CD8-positive, alpha-beta T cell (primary cell): ENCODE measurements at regions of chr1 and their contacts with region 1.

Region 1: DNA sequence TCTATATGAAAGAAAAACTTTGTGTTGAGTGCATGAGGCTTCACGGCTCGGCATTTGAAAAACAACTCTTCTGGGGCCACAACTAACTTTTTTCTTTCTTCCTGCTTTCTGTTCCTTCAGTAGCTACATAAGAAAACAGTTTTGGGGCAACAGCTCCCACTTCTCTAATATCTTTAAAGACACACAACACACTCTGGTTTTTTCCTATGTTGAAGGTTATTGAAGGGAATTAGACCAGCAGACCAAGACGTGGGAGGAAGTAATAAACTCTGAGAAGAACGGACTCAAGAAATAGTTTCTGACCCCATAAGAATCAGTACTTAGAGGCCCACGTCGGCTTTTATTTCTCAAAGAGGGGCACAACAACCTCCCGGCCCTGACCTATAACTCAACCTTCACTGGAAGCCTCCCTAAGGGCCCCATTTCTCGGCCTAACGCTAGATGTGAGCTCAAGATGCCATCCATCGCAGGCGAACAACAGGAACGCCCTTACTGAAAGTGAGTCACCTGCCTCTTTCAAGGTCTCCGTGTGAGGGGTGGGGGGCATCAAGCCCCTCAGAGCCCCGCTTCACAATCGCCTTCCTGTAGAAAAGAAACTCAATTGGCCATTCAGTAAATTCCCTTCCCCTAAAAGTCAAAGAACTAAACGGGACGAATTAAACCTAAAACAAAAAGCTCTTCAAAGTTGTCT is 844 bp downstream of the ZMYM6 start:
- DNase-seq: peak in 8 of 9 experiments; percentile 26 to 65 (median 56)
- ATAC-seq: peak; percentile 59
- H3K4me3 ChIP-seq: peak overlapping the region; percentile 92 to 97
- H3K4me3 Mint-ChIP-seq: peak overlapping the region; percentile 99
- H3K27ac ChIP-seq: peak overlapping the region; percentile 62 to 85
- H3K27ac Mint-ChIP-seq: peak overlapping the region; percentile 98
- H3K4me1 ChIP-seq: peaks cover 25% of the 10 kb centered on the region
- H3K4me1 Mint-ChIP-seq: peaks cover 49% of the 10 kb centered on the region
- H3K27me3 ChIP-seq: no peaks in the 10 kb centered on the region
- H3K27me3 Mint-ChIP-seq: no peaks in the 10 kb centered on the region
- CTCF ChIP-seq: no peak

Region 2: DNA sequence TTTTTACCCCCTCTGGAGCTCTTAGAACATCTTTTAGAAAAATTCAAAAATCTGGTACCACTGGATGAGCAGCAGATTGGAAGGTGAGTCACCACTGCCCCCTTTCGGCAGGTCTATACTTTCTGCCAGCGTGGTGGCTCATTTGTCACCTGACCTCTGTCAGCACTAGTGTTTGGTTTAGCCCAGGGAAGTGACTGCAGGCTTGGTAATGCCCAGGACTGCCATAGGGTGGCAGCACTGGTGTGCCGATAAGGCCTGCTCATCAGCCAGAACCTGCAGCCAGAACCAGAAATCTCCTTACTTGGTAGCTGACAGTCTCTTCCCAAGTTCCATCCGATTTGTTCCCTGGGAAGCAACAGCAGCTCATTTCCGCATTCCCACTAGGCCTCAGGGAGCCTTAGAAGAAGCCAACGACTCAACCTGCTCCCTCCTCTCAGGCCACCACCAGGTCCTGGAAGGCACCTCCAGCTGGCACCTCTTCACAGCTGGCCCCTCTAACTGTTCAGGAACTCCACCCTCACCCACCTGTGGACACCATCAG is 178.2 kb before region 1 on chr1:
- CTCF ChIA-PET with region 1: interaction called, 3 read pairs
- POLR2A ChIA-PET with region 1: no interaction called
- intact Hi-C with region 1: loop called in 1 of 2 experiments (anchors 1 kb)
- DNase-seq: peak; percentile 77 to 96 (median 87)
- ATAC-seq: peak; percentile 100
- H3K4me3 ChIP-seq: no peak overlapping the region
- H3K4me3 Mint-ChIP-seq: no peak overlapping the region
- H3K27ac ChIP-seq: peak overlapping the region in 1 of 2 experiments; percentile 46
- H3K27ac Mint-ChIP-seq: peak overlapping the region; percentile 7
- H3K4me1 ChIP-seq: peaks cover 2% of the 10 kb centered on the region
- H3K4me1 Mint-ChIP-seq: peaks cover 23% of the 10 kb centered on the region
- H3K27me3 ChIP-seq: no peaks in the 10 kb centered on the region
- H3K27me3 Mint-ChIP-seq: no peaks in the 10 kb centered on the region
- CTCF ChIP-seq: peak; percentile 99

Region 3: DNA sequence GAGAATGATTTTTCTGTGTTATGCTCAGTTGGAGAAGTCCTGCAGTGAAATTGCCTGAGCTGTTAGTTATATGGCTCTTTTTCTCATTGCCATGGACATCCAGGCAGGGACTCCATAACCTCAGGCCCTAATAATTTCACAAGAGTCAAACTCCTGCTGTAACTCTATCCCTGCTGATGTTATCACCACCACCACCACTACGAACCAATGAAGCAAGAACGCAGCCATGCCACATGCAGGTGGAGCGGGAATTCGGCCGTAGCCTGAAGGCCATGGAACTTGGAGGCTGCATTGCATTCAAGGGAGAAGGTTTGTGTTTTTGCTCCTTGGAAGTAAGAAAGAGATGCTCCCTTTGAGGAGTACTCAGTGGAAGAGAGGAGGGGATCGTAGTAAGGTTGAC is 84.7 kb before region 1 on chr1:
- CTCF ChIA-PET with region 1: no interaction called
- POLR2A ChIA-PET with region 1: no interaction called
- intact Hi-C with region 1: no loop called
- DNase-seq: no peak
- ATAC-seq: no peak
- H3K4me3 ChIP-seq: no peak overlapping the region
- H3K4me3 Mint-ChIP-seq: no peak overlapping the region
- H3K27ac ChIP-seq: no peak overlapping the region
- H3K27ac Mint-ChIP-seq: no peak overlapping the region
- H3K4me1 ChIP-seq: no peaks in the 10 kb centered on the region
- H3K4me1 Mint-ChIP-seq: no peaks in the 10 kb centered on the region
- H3K27me3 ChIP-seq: no peaks in the 10 kb centered on the region
- H3K27me3 Mint-ChIP-seq: peaks cover 26% of the 10 kb centered on the region
- CTCF ChIP-seq: no peak

Region 4: DNA sequence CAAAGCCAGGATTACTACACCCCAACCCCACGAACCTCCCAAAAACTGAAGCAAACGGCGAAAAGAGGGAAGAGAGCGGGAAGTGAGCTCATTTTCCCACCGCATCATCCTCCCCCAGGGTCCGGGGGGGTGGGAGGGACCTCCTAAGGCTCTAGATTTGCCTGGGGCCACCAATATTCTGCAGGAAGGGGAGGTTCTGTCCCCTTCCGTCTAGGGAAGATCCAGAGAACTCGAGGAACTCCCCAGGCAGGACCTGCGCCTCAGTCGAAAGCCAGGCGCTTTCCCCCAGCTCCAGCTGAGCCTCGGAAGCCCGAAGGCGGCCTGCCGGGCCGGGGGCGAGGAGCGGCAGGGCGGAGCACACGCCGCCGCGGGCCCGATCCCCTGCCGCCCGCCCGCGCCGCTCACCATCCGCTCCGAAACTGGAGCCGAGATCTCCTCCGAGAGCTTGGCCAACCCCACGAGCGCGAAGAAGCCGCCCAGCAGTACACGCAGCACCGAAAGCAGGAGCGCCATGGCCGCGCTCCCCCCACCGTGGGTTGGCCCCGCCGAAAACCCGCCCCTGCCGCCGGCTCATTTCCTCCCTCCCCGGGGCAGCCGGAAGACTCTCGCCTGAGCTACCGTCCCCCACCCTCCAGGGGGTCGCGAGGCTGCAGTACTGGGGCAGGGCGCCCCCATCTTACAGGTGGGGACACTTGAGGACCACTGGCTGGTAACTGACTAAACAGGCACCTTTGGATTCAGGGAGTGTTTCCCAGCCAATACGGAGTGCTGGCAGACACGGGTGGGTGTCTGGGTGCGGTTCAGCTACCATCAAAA is 45.9 kb before region 1 on chr1 and contains the start of gene TMEM35B:
- CTCF ChIA-PET with region 1: no interaction called
- POLR2A ChIA-PET with region 1: interaction called, 12 read pairs
- intact Hi-C with region 1: loop called (anchors 1 to 2 kb)
- DNase-seq: peak; percentile 55 to 87 (median 82)
- ATAC-seq: peak; percentile 96
- H3K4me3 ChIP-seq: peak within 1 kb of the TSS; percentile 77 to 81
- H3K4me3 Mint-ChIP-seq: peak within 1 kb of the TSS; percentile 99
- H3K27ac ChIP-seq: peak within 1 kb of the TSS; percentile 80 to 87
- H3K27ac Mint-ChIP-seq: peak within 1 kb of the TSS; percentile 98
- H3K4me1 ChIP-seq: peaks cover 28% of the 10 kb centered on the region
- H3K4me1 Mint-ChIP-seq: peaks cover 42% of the 10 kb centered on the region
- H3K27me3 ChIP-seq: no peaks in the 10 kb centered on the region
- H3K27me3 Mint-ChIP-seq: no peaks in the 10 kb centered on the region
- CTCF ChIP-seq: no peak
- total RNA-seq, gene TMEM35B: 1.0 to 2.6 TPM

Region 5: DNA sequence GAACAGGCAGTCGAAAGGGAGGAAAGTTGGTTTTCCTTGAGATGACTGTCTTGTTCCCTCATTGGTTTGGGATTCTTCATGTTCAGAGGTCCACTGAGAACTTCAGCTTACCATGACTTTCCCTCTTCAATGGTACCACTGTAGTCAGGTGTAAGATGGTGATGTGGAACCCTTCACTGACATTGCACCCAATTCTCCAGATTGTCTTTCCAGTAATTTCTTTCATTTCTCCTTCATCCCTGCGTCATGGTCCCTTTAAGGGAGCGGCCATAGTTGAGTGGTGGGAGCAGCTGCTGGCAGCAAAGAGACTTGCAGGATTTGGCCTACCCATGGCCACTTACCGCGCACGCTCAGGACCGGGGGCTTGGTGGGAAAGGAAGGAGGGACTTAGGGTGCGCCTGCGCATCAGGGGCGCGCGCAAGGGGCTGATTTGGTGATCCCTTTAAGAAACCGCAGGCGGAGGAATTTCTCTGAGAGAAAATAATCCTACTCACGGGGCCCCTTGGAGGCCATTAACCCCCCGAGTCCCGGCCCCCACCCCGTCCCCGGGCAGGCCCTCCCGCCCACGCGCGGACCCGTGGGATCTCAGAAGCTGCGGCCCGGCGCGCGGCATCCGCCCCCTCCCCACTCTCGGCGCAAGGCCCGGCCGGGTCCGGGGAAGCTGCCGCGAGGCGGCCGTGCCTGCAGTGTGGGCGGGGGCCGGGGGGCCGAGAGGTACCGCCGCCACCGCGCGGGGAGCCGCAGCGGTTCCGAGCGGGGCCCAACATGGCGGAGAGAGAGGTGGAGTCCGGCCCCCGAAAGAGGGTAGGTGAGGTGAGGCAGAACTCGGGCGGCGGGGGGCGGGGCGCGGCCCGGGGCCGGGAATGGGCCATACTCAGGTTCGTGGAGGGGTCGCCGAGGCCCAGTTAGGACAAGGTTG is 237.6 kb after region 1 on chr1 and contains the start of gene ZMYM4:
- CTCF ChIA-PET with region 1: no interaction called
- POLR2A ChIA-PET with region 1: no interaction called
- intact Hi-C with region 1: loop called (anchors 2 kb)
- DNase-seq: peak; percentile 70 to 96 (median 88)
- ATAC-seq: peak; percentile 95
- H3K4me3 ChIP-seq: peak within 1 kb of the TSS; percentile 65 to 73
- H3K4me3 Mint-ChIP-seq: peak within 1 kb of the TSS; percentile 89
- H3K27ac ChIP-seq: peak within 1 kb of the TSS; percentile 40 to 68
- H3K27ac Mint-ChIP-seq: peak within 1 kb of the TSS; percentile 93
- H3K4me1 ChIP-seq: peaks cover 14% of the 10 kb centered on the region
- H3K4me1 Mint-ChIP-seq: peaks cover 38% of the 10 kb centered on the region
- H3K27me3 ChIP-seq: no peaks in the 10 kb centered on the region
- H3K27me3 Mint-ChIP-seq: peaks cover 10% of the 10 kb centered on the region
- CTCF ChIP-seq: no peak
- total RNA-seq, gene ZMYM4: 32.1 to 36.5 TPM

Region 6: DNA sequence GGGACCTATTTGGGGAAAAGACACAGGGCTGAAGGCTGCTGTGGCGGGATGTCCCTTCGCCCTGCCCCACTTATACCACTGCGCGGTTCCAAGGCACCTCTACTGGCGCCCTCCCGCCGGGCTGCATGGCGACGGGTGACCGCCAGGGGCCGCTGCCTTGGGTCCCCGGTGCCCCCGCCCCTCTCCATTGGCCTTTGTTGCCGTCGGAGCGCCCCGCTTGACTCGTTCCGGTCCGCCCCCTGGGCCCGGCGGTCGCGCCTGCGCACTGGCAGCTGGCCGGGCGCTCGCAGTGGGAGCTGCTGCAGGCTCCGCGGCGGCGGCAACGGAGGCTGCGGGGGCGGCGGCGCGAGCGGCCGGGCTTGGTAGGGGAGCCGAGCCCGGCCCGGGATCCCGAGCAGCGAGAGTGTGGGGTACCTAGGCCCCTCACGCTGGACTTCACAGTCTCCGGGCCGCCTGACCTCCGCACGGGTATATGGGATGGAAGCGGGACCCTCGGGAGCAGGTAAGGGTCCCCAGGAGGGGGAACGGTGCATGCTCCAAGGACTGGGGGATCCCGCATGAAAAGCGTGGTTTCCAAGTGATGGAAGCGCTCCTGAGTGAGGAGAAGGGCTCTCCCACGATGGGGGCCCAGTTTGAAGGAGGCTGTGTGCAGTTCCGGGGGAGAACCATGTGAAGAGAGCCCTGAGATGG is 852.2 kb after region 1 on chr1 and contains the start of gene AGO1:
- CTCF ChIA-PET with region 1: no interaction called
- POLR2A ChIA-PET with region 1: no interaction called
- intact Hi-C with region 1: loop called in 1 of 2 experiments (anchors 5 kb)
- DNase-seq: peak; percentile 94 to 99 (median 97)
- ATAC-seq: peak; percentile 99
- H3K4me3 ChIP-seq: peak within 1 kb of the TSS; percentile 99 to 100
- H3K4me3 Mint-ChIP-seq: peak within 1 kb of the TSS; percentile 92
- H3K27ac ChIP-seq: peak within 1 kb of the TSS; percentile 59 to 68
- H3K27ac Mint-ChIP-seq: peak within 1 kb of the TSS; percentile 69
- H3K4me1 ChIP-seq: peaks cover 23% of the 10 kb centered on the region
- H3K4me1 Mint-ChIP-seq: peaks cover 52% of the 10 kb centered on the region
- H3K27me3 ChIP-seq: peaks cover 0 to 3% of the 10 kb centered on the region in 2 experiments
- H3K27me3 Mint-ChIP-seq: peaks cover 3% of the 10 kb centered on the region
- CTCF ChIP-seq: peak; percentile 77
- total RNA-seq, gene AGO1: 15.8 TPM